CD4-positive, alpha-beta T cell (primary cell): ENCODE measurements at regions of chr18 and their contacts with region 1.

Region 1: DNA sequence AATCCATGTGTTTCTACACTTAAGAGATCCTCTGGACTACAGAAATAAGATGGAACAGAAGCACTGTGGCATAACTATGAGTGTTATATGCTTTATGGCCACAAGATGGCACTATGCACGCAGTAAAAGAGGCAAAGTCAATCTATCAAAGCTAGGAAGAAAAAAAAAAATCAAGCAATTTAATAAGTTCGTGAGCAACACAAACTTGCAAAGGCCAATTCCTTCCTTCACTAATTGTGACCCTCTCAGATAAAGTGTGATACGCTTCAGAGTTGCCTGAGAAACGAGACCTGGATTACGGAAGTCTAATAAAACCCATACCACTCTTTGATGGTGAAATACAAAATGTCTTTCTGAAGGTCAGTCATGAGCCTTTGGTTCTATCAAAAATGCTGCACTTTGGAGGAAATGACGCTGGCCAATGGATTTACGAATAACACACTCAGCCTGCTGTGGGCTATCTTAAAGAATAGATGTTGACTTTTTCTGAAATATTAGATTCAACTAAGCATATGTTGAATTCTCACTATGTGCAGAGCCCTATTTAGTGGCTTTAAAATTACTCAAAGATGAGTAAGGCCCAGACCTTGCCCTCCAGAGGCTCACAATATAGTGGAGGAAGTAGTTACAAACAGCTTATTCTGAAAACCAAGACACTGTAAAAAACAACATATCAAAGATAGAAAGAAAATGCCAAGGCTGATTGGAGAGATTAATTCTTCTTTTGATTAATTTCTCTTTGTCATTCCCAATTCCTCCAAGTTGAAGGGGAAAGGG is 35.5 kb upstream of the TTR start:
- DNase-seq: peak in 6 of 14 experiments; percentile 4 to 71 (median 34)
- ATAC-seq: peak; percentile 54
- H3K4me3 ChIP-seq: no peak overlapping the region
- H3K4me3 Mint-ChIP-seq: no peak overlapping the region
- H3K27ac ChIP-seq: no peak overlapping the region
- H3K27ac Mint-ChIP-seq: no peak overlapping the region
- H3K4me1 ChIP-seq: no peaks in the 10 kb centered on the region
- H3K4me1 Mint-ChIP-seq: peaks cover 4% of the 10 kb centered on the region
- H3K27me3 ChIP-seq: peaks cover 0 to 2% of the 10 kb centered on the region in 2 experiments
- H3K27me3 Mint-ChIP-seq: peaks cover 13% of the 10 kb centered on the region
- CTCF ChIP-seq: peak; percentile 87

Region 2: DNA sequence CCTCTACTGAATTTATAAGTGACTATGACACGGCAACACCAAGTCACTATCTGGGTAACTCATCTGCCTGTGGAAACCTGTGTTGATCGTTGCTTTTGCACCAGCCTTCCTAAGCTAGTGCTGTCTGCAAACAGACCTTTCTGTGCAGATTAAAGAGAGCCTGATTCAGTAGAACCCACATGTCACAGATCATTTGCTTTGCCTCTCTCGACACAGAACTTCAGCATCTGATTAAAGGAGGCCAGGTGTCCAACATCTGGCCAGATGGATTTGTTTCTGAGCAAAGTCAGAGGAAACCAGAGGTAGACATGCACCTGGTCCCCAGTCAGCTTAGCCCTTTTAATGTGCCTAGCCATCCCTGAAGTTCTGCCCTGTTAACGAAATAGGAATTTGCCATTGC is 20.5 kb after region 1 on chr18:
- CTCF ChIA-PET with region 1: no interaction called
- POLR2A ChIA-PET with region 1: no interaction called
- intact Hi-C with region 1: loop called in 1 of 2 experiments (anchors 1 kb)
- DNase-seq: no peak
- ATAC-seq: no peak
- H3K4me3 ChIP-seq: no peak overlapping the region
- H3K4me3 Mint-ChIP-seq: no peak overlapping the region
- H3K27ac ChIP-seq: no peak overlapping the region
- H3K27ac Mint-ChIP-seq: no peak overlapping the region
- H3K4me1 ChIP-seq: no peaks in the 10 kb centered on the region
- H3K4me1 Mint-ChIP-seq: no peaks in the 10 kb centered on the region
- H3K27me3 ChIP-seq: no peaks in the 10 kb centered on the region
- H3K27me3 Mint-ChIP-seq: no peaks in the 10 kb centered on the region
- CTCF ChIP-seq: no peak

Region 3: DNA sequence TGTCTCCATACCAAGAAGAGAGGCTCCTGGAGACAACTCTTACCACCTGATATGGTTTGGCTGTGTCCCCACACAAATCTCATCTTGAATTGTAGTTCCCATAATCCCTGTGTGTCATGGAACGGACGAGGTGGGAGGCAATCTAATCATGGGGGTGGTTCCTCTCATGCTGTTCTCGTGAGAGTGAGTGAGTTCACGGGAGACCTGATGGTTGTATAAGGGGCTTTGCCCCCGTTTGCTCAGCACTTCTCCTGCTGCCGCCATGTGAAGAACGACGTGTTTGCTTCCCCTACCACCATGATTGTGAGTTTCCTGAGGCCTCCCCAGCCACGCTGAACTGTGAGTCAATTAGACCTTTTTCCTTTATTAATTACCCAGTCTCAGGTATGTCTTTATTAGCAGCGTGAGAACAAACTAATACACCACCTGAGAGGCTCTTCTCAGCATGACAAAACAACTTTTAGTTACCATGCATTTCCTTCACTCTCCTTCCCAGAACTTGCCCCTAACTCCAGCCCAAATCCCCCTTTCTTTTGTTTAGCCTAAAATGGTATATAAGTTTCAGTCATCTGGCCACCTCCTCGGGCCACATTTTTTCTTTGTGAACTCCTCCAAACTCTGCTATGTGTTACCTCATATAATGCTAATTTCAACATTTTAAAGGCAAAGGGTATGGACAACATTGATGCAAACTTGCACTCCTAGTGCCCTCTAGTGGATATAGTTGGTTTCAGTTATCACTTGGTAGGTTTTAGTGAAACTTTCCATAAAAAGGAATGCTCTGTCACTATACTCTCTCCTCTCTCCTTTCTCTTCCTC is 263.2 kb after region 1 on chr18:
- CTCF ChIA-PET with region 1: no interaction called
- POLR2A ChIA-PET with region 1: no interaction called
- intact Hi-C with region 1: loop called (anchors 2 to 5 kb)
- DNase-seq: peak in 3 of 14 experiments; percentile 36 to 51 (median 43)
- ATAC-seq: no peak
- H3K4me3 ChIP-seq: no peak overlapping the region
- H3K4me3 Mint-ChIP-seq: no peak overlapping the region
- H3K27ac ChIP-seq: no peak overlapping the region
- H3K27ac Mint-ChIP-seq: no peak overlapping the region
- H3K4me1 ChIP-seq: no peaks in the 10 kb centered on the region
- H3K4me1 Mint-ChIP-seq: no peaks in the 10 kb centered on the region
- H3K27me3 ChIP-seq: no peaks in the 10 kb centered on the region
- H3K27me3 Mint-ChIP-seq: no peaks in the 10 kb centered on the region
- CTCF ChIP-seq: peak; percentile 89

Region 4: GRCh38 chr18:31977270-31977872 is 421.2 kb after region 1 on chr18:
- CTCF ChIA-PET with region 1: no interaction called
- POLR2A ChIA-PET with region 1: no interaction called
- intact Hi-C with region 1: loop called (anchors 5 kb)
- DNase-seq: peak in 8 of 14 experiments; percentile 4 to 63 (median 32)
- ATAC-seq: no peak
- H3K4me3 ChIP-seq: no peak overlapping the region
- H3K4me3 Mint-ChIP-seq: no peak overlapping the region
- H3K27ac ChIP-seq: no peak overlapping the region
- H3K27ac Mint-ChIP-seq: no peak overlapping the region
- H3K4me1 ChIP-seq: no peaks in the 10 kb centered on the region
- H3K4me1 Mint-ChIP-seq: no peaks in the 10 kb centered on the region
- H3K27me3 ChIP-seq: no peaks in the 10 kb centered on the region
- H3K27me3 Mint-ChIP-seq: no peaks in the 10 kb centered on the region
- CTCF ChIP-seq: peak; percentile 68